ENCODE measurements at regions of chr17 and their contacts with region 1.

Region 1: DNA sequence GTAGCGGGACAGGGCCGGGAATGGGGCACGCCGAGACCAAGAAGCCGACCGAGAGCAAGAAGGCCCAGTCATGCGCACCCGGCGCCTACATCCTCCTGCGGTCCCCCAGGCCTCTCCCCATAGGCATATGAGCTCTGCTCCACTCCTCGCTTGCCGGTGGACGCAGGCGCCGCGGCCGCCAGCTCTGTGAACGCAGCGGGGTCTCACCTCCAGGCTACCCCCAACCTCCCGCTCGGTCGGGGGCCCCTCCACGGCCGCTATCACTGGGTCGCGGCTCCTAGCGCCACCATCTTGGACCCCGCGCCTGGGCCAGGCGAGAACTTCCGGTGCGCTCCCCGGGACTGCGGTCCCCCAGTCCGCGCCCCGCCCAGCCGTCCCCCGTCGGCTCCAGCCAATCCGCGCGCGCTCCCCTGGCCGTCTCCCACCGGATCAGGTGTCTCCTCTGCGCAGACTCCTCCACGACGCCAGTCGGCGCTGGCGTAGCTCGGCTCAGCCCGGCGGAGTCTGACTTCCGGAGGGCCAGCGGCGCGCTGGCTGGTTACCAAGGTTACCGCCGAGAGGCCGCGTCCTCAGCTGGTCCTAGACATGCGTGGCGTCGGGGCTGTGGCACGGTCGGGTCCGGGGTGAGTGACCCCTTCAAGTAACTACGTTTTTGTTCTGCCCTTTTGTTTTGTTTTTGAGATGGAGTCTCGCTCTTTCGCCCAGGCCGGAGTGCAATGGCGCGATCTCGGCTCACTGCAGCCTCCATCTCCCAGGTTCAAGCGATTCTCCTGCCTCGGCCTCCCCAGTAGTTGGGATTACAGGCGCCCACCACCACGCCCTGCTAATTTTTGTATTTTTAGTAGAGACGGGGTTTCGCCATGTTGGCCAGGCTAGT is at the start of gene ZNF594:
- DNase-seq: peak; percentile 99
- H3K4me3 Mint-ChIP-seq: peak within 1 kb of the TSS; percentile 94
- H3K27ac Mint-ChIP-seq: peak within 1 kb of the TSS; percentile 90
- H3K4me1 Mint-ChIP-seq: peaks cover 21% of the 10 kb centered on the region
- H3K27me3 Mint-ChIP-seq: no peaks in the 10 kb centered on the region
- total RNA-seq, gene ZNF594: 10.1 and 12.1 TPM in 2 replicates

Region 2: GRCh38 chr17:5078106-5079028 is 113.4 kb before region 1 on chr17 and contains the start of gene ZFP3:
- intact Hi-C with region 1: loop called (anchors 10 kb)
- DNase-seq: peak; percentile 93
- H3K4me3 Mint-ChIP-seq: peak within 1 kb of the TSS; percentile 87
- H3K27ac Mint-ChIP-seq: peak within 1 kb of the TSS; percentile 92
- H3K4me1 Mint-ChIP-seq: peaks cover 18% of the 10 kb centered on the region
- H3K27me3 Mint-ChIP-seq: peaks cover 2% of the 10 kb centered on the region
- total RNA-seq, gene ZFP3: 1.9 and 2.6 TPM in 2 replicates

Region 3: DNA sequence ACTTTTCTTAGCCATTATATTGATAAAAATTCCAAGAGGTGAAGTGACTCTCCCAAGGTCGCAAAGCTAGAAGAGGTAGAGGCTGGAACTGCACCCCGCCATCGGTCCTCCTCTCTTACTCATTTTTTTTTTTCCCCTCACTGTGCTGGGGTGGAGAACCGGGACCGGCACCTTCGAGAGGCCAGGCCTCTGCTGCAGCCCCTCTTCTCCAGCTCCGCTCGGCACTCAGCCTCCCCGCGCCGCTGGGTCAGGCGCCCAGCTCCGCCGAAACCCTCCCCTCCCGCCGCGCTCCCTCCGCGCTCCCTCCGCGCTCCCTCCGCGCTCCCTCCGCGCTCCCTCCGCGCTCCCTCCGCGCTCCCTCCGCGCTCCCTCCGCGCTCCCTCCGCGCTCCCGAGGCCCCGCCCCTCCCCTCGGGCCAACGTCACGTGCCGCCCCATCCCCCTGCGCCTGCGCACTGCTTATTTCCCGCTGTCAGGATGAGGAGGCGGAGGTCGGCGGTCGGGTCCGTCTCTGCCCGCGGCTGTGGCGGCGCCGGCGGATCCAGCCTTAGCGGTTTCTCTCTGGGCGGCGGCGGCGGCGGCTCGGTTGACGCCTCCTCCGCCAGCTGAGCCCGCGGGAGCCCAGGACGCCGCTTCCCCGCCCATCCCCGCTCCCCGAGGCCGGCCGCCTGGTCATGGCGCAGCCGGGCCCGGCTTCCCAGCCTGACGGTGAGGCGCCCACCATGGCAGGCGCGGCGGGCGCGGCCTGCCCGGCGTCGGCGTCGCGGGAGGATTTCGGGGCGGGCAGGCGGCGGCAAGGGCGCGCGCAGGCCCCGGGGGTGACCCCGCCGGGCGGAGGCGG is 90.3 kb after region 1 on chr17 and contains the start of gene RABEP1:
- intact Hi-C with region 1: no loop called
- DNase-seq: peak; percentile 98
- H3K4me3 Mint-ChIP-seq: peak within 1 kb of the TSS; percentile 91
- H3K27ac Mint-ChIP-seq: peak within 1 kb of the TSS; percentile 94
- H3K4me1 Mint-ChIP-seq: peaks cover 23% of the 10 kb centered on the region
- H3K27me3 Mint-ChIP-seq: peaks cover 2% of the 10 kb centered on the region
- total RNA-seq, gene RABEP1: 57.3 and 58.2 TPM in 2 replicates

Measured in activated CD4-positive, alpha-beta T cell treated with anti-CD3 and anti-CD28 coated beads, Interleukin-2, amount 10 ng/mL, durations not matched to agents 24 days and 14 days (primary cell).